Aorta (tissue), 5 donors: ENCODE measurements at regions of chr5 and their contacts with region 1.

Region 1: GRCh38 chr5:172902497-172903200 is 56.6 kb upstream of the RPL26L1 start:
- DNase-seq: peak; percentile 86 to 96
- ATAC-seq: peak; percentile 61
- H3K4me3 ChIP-seq: no peak overlapping the region
- H3K27ac ChIP-seq: peak overlapping the region; percentile 97 to 99
- H3K4me1 ChIP-seq: peaks cover 0 to 6% of the 10 kb centered on the region in 2 donors
- H3K27me3 ChIP-seq: no peaks in the 10 kb centered on the region

Region 2: GRCh38 chr5:172868924-172869591 is 33.6 kb before region 1 on chr5:
- intact Hi-C with region 1: loop called (anchors 2 kb)
- DNase-seq: peak; percentile 91 to 94
- ATAC-seq: peak; percentile 89
- H3K4me3 ChIP-seq: no peak overlapping the region
- H3K27ac ChIP-seq: peak overlapping the region; percentile 80 to 91
- H3K4me1 ChIP-seq: peaks cover 3 to 4% of the 10 kb centered on the region in 2 donors
- H3K27me3 ChIP-seq: no peaks in the 10 kb centered on the region

Region 3: GRCh38 chr5:172932313-172933017 is 29.8 kb after region 1 on chr5:
- intact Hi-C with region 1: loop called in 1 of 2 experiments (anchors 2 kb)
- DNase-seq: peak; percentile 86 to 94
- ATAC-seq: peak; percentile 93
- H3K4me3 ChIP-seq: no peak overlapping the region
- H3K27ac ChIP-seq: peak overlapping the region; percentile 51 to 97
- H3K4me1 ChIP-seq: peaks cover 0 to 5% of the 10 kb centered on the region in 2 donors
- H3K27me3 ChIP-seq: no peaks in the 10 kb centered on the region